Mammary epithelial cell (primary cell): ENCODE measurements at regions of chr19 and their contacts with region 1.

Region 1: DNA sequence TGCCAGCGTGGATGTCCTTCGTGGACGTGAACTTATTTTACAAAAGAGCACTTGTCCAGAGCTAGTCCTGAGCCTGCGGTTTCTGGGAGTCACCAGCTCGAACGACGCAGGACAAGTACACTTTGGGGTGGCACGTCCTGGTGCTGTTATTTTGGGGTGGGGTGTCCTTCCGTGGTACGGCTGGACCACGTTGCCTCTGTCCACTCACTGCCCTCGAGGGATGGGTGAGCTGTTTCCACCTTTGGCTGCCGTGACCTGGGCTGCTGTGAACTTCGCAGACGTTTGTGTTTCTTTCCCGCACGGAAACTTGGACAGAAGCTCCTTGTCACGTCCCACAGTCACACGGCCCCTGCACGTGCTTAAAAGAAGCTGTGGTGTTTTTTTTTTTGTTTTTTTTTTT is 11.0 kb downstream of the GZMM start:
- DNase-seq: no peak
- H3K4me3 ChIP-seq: no peak overlapping the region
- H3K27ac ChIP-seq: no peak overlapping the region
- H3K4me1 ChIP-seq: peaks cover 3% of the 10 kb centered on the region
- H3K27me3 ChIP-seq: no peaks in the 10 kb centered on the region
- CTCF ChIP-seq: no peak

Region 2: GRCh38 chr19:488505-489417 is 66.1 kb before region 1 on chr19:
- CTCF ChIA-PET with region 1: no interaction called
- dilution Hi-C with region 1: no loop called
- in situ Hi-C with region 1: no loop called
- intact Hi-C with region 1: no loop called
- DNase-seq: peak; percentile 92
- H3K4me3 ChIP-seq: peak overlapping the region; percentile 80 to 96 (median 85)
- H3K27ac ChIP-seq: peak overlapping the region; percentile 74
- H3K4me1 ChIP-seq: peaks cover 20% of the 10 kb centered on the region
- H3K27me3 ChIP-seq: no peaks in the 10 kb centered on the region
- CTCF ChIP-seq: no peak

Region 3: DNA sequence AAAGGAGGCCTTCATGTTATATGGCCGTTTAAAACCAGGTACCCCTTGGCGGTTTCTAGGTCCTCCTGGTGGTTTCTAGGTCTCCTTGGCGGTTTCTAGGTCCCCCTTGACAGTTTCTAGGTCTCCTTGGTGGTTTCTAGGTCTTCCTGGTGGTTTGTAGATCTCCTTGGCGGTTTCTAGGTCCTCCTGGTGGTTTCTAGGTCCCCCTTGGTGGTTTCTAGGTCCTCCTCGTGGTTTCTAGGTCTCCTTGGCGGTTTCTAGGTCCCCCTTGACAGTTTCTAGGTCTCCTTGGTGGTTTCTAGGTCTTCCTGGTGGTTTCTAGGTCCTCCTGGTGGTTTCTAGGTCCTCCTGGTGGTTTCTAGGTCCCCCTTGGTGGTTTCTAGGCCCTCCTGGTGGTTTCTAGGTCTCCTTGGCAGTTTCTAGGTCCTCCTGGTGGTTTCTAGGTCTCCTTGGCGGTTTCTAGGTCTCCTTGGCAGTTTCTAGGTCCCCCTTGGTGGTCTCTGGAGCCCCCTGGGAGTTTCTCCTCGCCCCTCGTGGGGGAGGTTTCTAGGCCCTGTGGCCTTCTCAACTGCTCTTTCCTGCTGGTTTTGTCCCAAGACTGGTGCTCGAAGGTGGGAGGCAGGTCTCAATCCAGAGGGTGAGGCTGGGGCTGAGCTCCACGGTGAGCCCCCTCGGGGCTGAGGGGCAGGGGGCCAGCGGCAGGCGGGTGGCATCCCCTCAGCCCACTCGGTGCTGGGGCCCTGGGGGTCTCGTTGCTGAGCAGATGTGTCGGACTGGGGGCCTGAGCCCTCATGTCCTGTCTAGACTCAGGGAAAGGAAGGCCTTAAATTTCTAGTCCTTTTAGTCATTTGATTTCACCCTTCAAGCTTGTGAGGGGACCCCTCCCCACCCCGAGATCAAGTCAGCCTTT is 42.8 kb after region 1 on chr19:
- CTCF ChIA-PET with region 1: no interaction called
- dilution Hi-C with region 1: loop called (anchors 5 kb)
- in situ Hi-C with region 1: no loop called
- intact Hi-C with region 1: no loop called
- DNase-seq: no peak
- H3K4me3 ChIP-seq: no peak overlapping the region
- H3K27ac ChIP-seq: no peak overlapping the region
- H3K4me1 ChIP-seq: no peaks in the 10 kb centered on the region
- H3K27me3 ChIP-seq: no peaks in the 10 kb centered on the region
- CTCF ChIP-seq: no peak